ENCODE measurements at regions of chr10 and their contacts with region 1.

Region 1: DNA sequence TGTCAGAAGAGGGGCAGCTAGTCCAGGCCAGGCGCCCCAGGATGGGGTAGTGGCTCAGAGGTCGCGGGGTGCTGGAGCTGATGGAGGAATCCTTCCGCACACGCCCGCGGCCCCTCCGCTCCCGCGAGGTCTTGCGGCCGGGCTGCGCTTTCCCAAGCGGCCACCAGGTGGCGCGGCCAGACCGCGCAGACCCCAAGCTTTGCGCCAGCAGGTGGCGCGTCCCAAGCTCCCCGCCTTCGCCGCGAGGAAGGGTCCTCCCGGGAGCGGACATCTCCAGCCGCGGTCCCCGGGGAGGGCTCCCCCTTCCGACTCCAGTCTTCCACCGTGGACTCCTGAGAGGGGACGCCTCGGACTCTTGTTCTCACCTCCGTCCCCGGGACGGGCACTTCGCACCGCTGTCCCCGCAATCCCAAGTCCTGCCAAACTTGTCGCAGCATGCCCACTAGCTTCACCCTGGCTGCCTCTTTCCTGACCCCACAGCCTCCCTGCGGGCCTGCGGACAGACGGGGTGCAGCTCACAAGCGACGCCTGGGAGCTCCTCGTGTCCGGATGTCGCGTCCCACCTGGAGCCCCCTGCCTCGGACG is 19.4 kb downstream of the KCNK18 start:
- DNase-seq: peak; percentile 94
- H3K4me3 ChIP-seq: peak overlapping the region; percentile 59 to 66
- H3K27ac ChIP-seq: no peak overlapping the region
- H3K4me1 ChIP-seq: peaks cover 0 to 17% of the 10 kb centered on the region in 2 experiments; a peak in 1 of 4 replicates
- H3K27me3 ChIP-seq: no peaks in the 10 kb centered on the region
- CTCF ChIP-seq: peak; percentile 94
- EP300 ChIP-seq: no peak
- RAD21 ChIP-seq: peak; percentile 90

Region 2: GRCh38 chr10:117198088-117198487 is 18.6 kb before region 1 on chr10:
- CTCF ChIA-PET with region 1: interaction called, 71 read pairs
- POLR2A ChIA-PET with region 1: interaction called, 3 read pairs
- DNase-seq: no peak
- H3K4me3 ChIP-seq: no peak overlapping the region
- H3K27ac ChIP-seq: no peak overlapping the region
- H3K4me1 ChIP-seq: no peaks in the 10 kb centered on the region
- H3K27me3 ChIP-seq: no peaks in the 10 kb centered on the region
- CTCF ChIP-seq: no peak
- EP300 ChIP-seq: no peak
- RAD21 ChIP-seq: no peak

Region 3: DNA sequence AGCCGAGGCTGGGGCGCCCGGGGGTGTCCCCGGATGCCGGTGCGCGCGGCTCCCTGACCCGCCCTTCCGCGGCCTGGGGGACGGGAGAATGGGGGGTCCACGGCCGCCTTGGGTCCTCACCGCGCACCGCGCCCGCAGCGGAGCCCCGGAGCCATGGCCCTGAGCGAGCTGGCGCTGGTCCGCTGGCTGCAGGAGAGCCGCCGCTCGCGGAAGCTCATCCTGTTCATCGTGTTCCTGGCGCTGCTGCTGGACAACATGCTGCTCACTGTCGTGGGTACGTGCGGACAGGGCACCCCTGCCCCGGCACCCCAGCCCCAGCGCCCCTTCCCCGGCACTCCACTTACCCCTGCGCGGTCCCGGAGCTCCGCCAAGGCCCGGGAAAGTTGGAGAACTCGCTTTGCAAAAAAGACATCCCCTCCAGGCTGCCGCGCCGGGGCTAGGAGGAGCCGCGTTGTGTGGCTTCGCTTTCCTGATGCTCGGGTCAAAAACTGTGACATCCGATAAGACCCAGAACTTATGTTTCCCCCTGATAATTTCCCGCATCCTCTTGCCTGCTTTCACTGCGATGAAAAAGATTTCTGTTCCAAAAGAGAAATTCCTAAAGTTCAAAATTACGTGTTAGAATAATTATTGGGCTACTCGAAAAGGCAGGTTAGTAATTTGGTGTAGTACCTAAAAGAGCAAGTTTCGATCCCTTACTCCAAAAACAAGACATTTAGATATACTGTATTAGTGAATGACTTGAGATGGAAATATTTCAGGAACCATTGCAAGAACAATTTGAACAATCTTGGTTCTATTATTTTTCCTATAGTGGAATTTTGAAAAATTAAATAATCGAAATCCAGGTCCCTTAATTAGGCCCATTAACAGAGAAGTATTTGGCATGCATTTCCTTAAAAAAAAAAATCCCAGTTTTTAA is 25.1 kb after region 1 on chr10:
- CTCF ChIA-PET with region 1: interaction called, 13 read pairs
- POLR2A ChIA-PET with region 1: no interaction called
- DNase-seq: peak; percentile 75
- H3K4me3 ChIP-seq: peak overlapping the region in 1 of 2 experiments; percentile 33; a peak in 1 of 4 replicates
- H3K27ac ChIP-seq: no peak overlapping the region
- H3K4me1 ChIP-seq: no peaks in the 10 kb centered on the region; a peak in 1 of 4 replicates
- H3K27me3 ChIP-seq: 0 out of 2 replicates have a peak, but pooled peaks cover 20% of the 10 kb centered on the region
- CTCF ChIP-seq: no peak
- EP300 ChIP-seq: no peak
- RAD21 ChIP-seq: no peak

Region 4: GRCh38 chr10:117274509-117274908 is 57.8 kb after region 1 on chr10:
- CTCF ChIA-PET with region 1: interaction called, 14 read pairs
- POLR2A ChIA-PET with region 1: no interaction called
- DNase-seq: no peak
- H3K4me3 ChIP-seq: no peak overlapping the region
- H3K27ac ChIP-seq: no peak overlapping the region
- H3K4me1 ChIP-seq: peaks cover 0 to 11% of the 10 kb centered on the region in 2 experiments; a peak in 1 of 4 replicates
- H3K27me3 ChIP-seq: no peaks in the 10 kb centered on the region
- CTCF ChIP-seq: no peak
- EP300 ChIP-seq: no peak
- RAD21 ChIP-seq: no peak

Region 5: GRCh38 chr10:117334066-117334465 is 117.4 kb after region 1 on chr10:
- CTCF ChIA-PET with region 1: interaction called, 86 read pairs
- POLR2A ChIA-PET with region 1: no interaction called
- DNase-seq: no peak
- H3K4me3 ChIP-seq: no peak overlapping the region; a peak in 1 of 4 replicates
- H3K27ac ChIP-seq: no peak overlapping the region
- H3K4me1 ChIP-seq: no peaks in the 10 kb centered on the region; a peak in 1 of 4 replicates
- H3K27me3 ChIP-seq: no peaks in the 10 kb centered on the region
- CTCF ChIP-seq: no peak
- EP300 ChIP-seq: no peak
- RAD21 ChIP-seq: no peak

Region 6: GRCh38 chr10:117360994-117361667 is 144.4 kb after region 1 on chr10:
- CTCF ChIA-PET with region 1: interaction called, 14 read pairs
- POLR2A ChIA-PET with region 1: no interaction called
- DNase-seq: no peak
- H3K4me3 ChIP-seq: no peak overlapping the region
- H3K27ac ChIP-seq: peak overlapping the region in 1 of 2 experiments; percentile 30; a peak in 3 of 4 replicates
- H3K4me1 ChIP-seq: peaks cover 0 to 37% of the 10 kb centered on the region in 2 experiments; a peak in 3 of 4 replicates
- H3K27me3 ChIP-seq: no peaks in the 10 kb centered on the region
- CTCF ChIP-seq: no peak
- EP300 ChIP-seq: no peak
- RAD21 ChIP-seq: no peak

Region 7: GRCh38 chr10:117449636-117450035 is 232.9 kb after region 1 on chr10:
- CTCF ChIA-PET with region 1: interaction called, 11 read pairs
- POLR2A ChIA-PET with region 1: no interaction called
- DNase-seq: no peak
- H3K4me3 ChIP-seq: no peak overlapping the region
- H3K27ac ChIP-seq: no peak overlapping the region
- H3K4me1 ChIP-seq: no peaks in the 10 kb centered on the region
- H3K27me3 ChIP-seq: no peaks in the 10 kb centered on the region
- CTCF ChIP-seq: no peak
- EP300 ChIP-seq: no peak
- RAD21 ChIP-seq: no peak

Measured in SK-N-SH (cell line).